Sigmoid colon (tissue), 7 donors: ENCODE measurements at regions of chr22 and their contacts with region 1.

Region 1: GRCh38 chr22:18024276-18024947 is at the start of gene MICAL3:
- DNase-seq: peak; percentile 77
- H3K4me3 ChIP-seq: peak within 1 kb of the TSS; percentile 51 to 78 (median 76)
- H3K27ac ChIP-seq: peak within 1 kb of the TSS; percentile 87 to 95 (median 90)
- H3K4me1 ChIP-seq: peaks cover 2 to 42% (median 26%) of the 10 kb centered on the region in 4 donors
- H3K27me3 ChIP-seq: no peaks in the 10 kb centered on the region
- CTCF ChIP-seq: peak in 3 of 4 experiments; percentile 14 to 58 (median 33)
- EP300 ChIP-seq: no peak
- POLR2A ChIP-seq: no peak
- total RNA-seq, gene MICAL3: 26.3 to 94.2 (median 45.0) TPM

Region 2: DNA sequence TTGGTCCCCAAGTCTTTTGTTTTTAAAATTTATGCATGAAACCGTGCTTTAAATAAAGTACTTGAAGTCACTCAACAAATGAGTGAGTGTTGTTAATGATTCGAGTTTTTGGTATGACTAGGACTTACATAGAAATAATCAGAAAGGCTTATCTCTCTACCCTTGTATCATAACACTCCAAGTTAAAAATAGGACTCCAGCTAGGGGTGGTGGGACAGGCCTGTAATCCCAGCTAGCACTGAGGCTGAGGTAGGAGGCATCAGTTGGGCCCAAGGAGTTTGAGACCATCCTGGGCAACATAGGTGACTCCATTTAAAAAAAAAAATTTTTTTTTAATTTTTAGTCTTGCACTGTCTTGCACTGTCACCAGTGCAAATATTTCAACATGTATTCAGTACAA is 330.2 kb before region 1 on chr22:
- intact Hi-C with region 1: no loop called
- DNase-seq: no peak
- H3K4me3 ChIP-seq: no peak overlapping the region
- H3K27ac ChIP-seq: no peak overlapping the region
- H3K4me1 ChIP-seq: no peaks in the 10 kb centered on the region
- H3K27me3 ChIP-seq: no peaks in the 10 kb centered on the region
- CTCF ChIP-seq: no peak
- EP300 ChIP-seq: no peak
- POLR2A ChIP-seq: no peak

Region 3: GRCh38 chr22:17830043-17830961 is 194.1 kb before region 1 on chr22:
- intact Hi-C with region 1: loop called (anchors 2 kb)
- DNase-seq: peak; percentile 93
- H3K4me3 ChIP-seq: no peak overlapping the region
- H3K27ac ChIP-seq: peak overlapping the region; percentile 69 to 85 (median 80)
- H3K4me1 ChIP-seq: peaks cover 0 to 34% (median 31%) of the 10 kb centered on the region in 4 donors
- H3K27me3 ChIP-seq: no peaks in the 10 kb centered on the region
- CTCF ChIP-seq: peak; percentile 99 to 100 (median 99)
- EP300 ChIP-seq: no peak
- POLR2A ChIP-seq: no peak

Region 4: DNA sequence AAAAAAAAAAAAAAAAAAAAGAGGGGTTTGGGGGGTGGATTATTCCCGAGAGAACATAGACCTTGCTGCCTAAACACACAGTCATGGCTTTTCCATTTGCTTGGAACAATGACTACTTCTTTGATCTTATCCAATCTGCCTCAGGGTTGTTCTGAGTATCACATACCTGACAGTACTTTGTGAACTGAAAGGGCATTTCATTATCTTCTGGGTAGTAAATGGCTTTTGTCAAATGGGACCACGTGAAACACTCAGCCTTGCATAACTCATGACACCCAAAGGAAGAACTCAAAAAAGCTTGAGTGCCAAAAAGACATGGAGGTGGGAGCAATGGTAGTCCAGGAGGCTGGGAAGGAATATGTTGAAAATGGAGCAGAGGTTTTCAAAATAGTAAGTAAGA is 127.0 kb before region 1 on chr22:
- intact Hi-C with region 1: loop called (anchors 5 kb)
- DNase-seq: no peak
- H3K4me3 ChIP-seq: no peak overlapping the region
- H3K27ac ChIP-seq: peak overlapping the region in 2 of 4 donors; percentile 40 to 64
- H3K4me1 ChIP-seq: peaks cover 0 to 8% (median 1%) of the 10 kb centered on the region in 4 donors
- H3K27me3 ChIP-seq: no peaks in the 10 kb centered on the region
- CTCF ChIP-seq: no peak
- EP300 ChIP-seq: no peak
- POLR2A ChIP-seq: no peak

Region 5: DNA sequence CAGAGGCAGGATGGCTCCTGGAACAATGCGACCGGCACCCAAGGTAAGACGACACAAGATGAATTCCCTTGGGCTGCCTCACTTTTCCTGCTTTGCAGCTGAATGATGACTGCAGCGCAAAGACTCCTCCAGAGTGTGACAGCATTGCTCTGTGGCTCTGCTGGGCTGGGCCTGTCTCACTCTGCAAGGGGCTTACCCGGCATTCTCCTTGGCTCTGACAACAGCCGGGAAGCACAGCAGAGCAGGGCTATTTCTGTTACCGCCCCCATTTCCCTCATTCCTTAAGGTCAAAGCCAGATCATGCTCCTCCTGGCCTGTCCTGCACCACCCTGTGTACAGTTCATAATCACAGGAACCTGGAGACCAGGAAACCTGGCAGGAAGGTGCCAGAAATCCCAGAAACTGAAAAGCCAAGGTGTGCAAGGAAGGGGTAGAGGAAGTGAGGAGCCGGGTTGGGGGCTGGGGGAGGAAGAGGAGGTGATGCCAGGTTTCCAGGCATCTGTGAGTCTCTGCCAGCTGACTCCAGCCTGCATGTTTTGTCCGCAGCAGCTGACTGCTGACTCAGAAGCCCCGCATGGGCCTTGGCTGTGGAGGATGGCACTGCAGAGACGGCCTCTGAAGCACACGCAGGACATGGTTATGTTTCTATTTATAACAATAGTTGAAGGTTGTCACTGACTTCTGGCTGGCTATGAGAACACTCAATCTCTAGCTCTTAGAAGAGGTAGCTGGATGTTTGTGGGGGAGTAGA is 113.7 kb before region 1 on chr22:
- intact Hi-C with region 1: loop called (anchors 5 kb)
- DNase-seq: peak; percentile 94
- H3K4me3 ChIP-seq: no peak overlapping the region
- H3K27ac ChIP-seq: peak overlapping the region; percentile 80 to 88 (median 86)
- H3K4me1 ChIP-seq: peaks cover 0 to 74% (median 63%) of the 10 kb centered on the region in 4 donors
- H3K27me3 ChIP-seq: no peaks in the 10 kb centered on the region
- CTCF ChIP-seq: no peak
- EP300 ChIP-seq: peak in 2 of 4 donors; percentile 63 to 89
- POLR2A ChIP-seq: no peak

Region 6: DNA sequence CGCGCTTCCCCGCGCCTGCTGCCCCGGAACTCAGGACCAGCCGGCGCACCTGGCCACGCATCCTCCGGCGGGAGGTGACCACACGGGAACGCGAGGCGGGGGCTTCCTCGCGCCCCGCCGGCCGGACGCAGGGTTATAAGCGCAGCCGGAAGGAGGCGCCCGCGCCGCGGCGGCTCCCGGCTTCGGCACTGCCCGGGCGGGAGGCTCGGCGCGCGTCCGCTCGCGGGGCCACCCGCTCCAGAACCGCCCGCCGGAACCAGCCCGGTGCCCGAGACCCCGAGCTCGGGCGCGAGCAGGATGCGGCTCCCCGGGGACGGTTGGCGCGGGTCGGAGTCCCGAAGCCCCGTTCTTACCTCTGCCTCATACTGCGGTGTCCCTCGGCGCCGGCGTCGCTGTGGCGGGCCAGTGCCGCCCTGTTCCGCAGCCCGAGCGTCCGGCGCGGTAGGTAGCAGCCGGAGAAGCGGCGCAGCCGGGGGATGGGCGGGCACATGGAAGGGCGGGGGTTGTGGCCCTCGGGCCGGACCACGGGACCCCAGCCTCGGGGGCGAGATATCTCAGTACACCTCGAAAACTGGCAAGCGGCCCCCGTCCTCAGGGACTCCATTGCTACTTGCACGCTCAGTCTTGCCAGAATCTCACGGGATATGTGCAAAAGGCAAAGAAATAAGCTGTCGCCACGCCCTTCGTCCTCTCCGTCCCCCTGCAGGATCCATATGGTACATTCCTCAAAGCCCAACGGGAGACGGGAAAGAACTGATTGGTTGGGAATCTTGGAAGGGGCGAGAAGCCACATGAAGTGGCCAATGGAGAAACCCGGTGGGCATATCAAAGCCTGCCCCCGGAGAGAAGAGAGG is 23.1 kb before region 1 on chr22:
- intact Hi-C with region 1: loop called (anchors 2 kb)
- DNase-seq: peak; percentile 97
- H3K4me3 ChIP-seq: peak overlapping the region; percentile 73 to 87 (median 83)
- H3K27ac ChIP-seq: peak overlapping the region; percentile 89 to 94 (median 92)
- H3K4me1 ChIP-seq: peaks cover 0 to 53% (median 38%) of the 10 kb centered on the region in 4 donors
- H3K27me3 ChIP-seq: no peaks in the 10 kb centered on the region
- CTCF ChIP-seq: peak in 2 of 4 experiments; percentile 49 to 61
- EP300 ChIP-seq: no peak
- POLR2A ChIP-seq: peak; percentile 57 to 62